ENCODE measurements at regions of chr7 and their contacts with region 1.

Region 1: GRCh38 chr7:80918909-80919662 is at the start of gene SEMA3C:
- DNase-seq: peak; percentile 90
- H3K4me3 ChIP-seq: peak within 1 kb of the TSS; percentile 10 to 69 (median 14)
- H3K27ac ChIP-seq: no peak within 1 kb of the TSS
- H3K4me1 ChIP-seq: peaks cover 10% of the 10 kb centered on the region
- H3K27me3 ChIP-seq: peaks cover 57 to 85% of the 10 kb centered on the region in 2 experiments
- CTCF ChIP-seq: no peak
- POLR2A ChIP-seq: no peak
- total RNA-seq, gene SEMA3C: 0.09 and 0.18 TPM in 2 replicates

Region 2: GRCh38 chr7:80357530-80357929 is 561.6 kb before region 1 on chr7:
- CTCF ChIA-PET with region 1: no interaction called
- POLR2A ChIA-PET with region 1: no interaction called
- dilution Hi-C with region 1: no loop called
- intact Hi-C with region 1: no loop called
- DNase-seq: no peak
- H3K4me3 ChIP-seq: no peak overlapping the region
- H3K27ac ChIP-seq: no peak overlapping the region
- H3K4me1 ChIP-seq: no peaks in the 10 kb centered on the region
- H3K27me3 ChIP-seq: no peaks in the 10 kb centered on the region
- CTCF ChIP-seq: no peak
- POLR2A ChIP-seq: no peak

Region 3: DNA sequence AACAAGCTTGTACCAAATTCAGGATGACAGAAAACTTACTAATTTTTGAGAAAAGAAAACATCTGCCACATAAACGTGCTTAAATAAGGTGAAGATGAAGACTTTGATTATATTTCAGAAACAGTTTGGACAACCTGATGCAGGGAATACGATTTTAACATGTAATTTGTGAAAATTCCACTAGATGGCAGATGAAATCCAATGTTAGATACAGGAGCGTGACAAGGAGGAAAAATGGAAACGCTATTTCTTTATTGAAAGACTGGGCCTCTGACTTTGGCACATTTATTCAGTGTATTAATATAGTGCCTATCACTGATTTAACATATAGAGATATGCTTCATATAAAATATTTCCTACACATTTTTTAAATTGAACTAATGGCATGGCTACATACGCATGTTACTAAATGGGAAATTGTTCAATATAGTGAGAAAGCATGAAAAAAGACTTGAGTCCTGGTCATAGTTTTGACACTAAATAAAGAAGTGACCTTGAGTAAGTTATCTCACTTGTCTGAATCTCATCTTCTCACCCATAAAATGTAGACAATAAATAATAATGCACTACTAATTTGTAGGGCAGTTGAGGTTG is 219.9 kb before region 1 on chr7:
- CTCF ChIA-PET with region 1: interaction called, 4 read pairs
- POLR2A ChIA-PET with region 1: no interaction called
- dilution Hi-C with region 1: no loop called
- intact Hi-C with region 1: loop called (anchors 5 kb)
- DNase-seq: peak; percentile 61
- H3K4me3 ChIP-seq: no peak overlapping the region
- H3K27ac ChIP-seq: no peak overlapping the region
- H3K4me1 ChIP-seq: no peaks in the 10 kb centered on the region
- H3K27me3 ChIP-seq: peaks cover 6 to 18% of the 10 kb centered on the region in 2 experiments
- CTCF ChIP-seq: peak; percentile 32
- POLR2A ChIP-seq: no peak

Region 4: GRCh38 chr7:81211204-81211933 is 292.3 kb after region 1 on chr7:
- CTCF ChIA-PET with region 1: no interaction called
- POLR2A ChIA-PET with region 1: no interaction called
- dilution Hi-C with region 1: no loop called
- intact Hi-C with region 1: loop called (anchors 5 kb)
- DNase-seq: peak; percentile 48
- H3K4me3 ChIP-seq: no peak overlapping the region
- H3K27ac ChIP-seq: no peak overlapping the region
- H3K4me1 ChIP-seq: peaks cover 5% of the 10 kb centered on the region
- H3K27me3 ChIP-seq: no peaks in the 10 kb centered on the region
- CTCF ChIP-seq: no peak
- POLR2A ChIP-seq: no peak

Region 5: GRCh38 chr7:81447351-81447952 is 528.4 kb after region 1 on chr7:
- CTCF ChIA-PET with region 1: interaction called, 12 read pairs
- POLR2A ChIA-PET with region 1: no interaction called
- dilution Hi-C with region 1: no loop called
- intact Hi-C with region 1: loop called (anchors 1 kb)
- DNase-seq: peak; percentile 14
- H3K4me3 ChIP-seq: no peak overlapping the region
- H3K27ac ChIP-seq: no peak overlapping the region
- H3K4me1 ChIP-seq: no peaks in the 10 kb centered on the region
- H3K27me3 ChIP-seq: no peaks in the 10 kb centered on the region
- CTCF ChIP-seq: peak; percentile 18 to 21
- POLR2A ChIP-seq: no peak

Region 6: DNA sequence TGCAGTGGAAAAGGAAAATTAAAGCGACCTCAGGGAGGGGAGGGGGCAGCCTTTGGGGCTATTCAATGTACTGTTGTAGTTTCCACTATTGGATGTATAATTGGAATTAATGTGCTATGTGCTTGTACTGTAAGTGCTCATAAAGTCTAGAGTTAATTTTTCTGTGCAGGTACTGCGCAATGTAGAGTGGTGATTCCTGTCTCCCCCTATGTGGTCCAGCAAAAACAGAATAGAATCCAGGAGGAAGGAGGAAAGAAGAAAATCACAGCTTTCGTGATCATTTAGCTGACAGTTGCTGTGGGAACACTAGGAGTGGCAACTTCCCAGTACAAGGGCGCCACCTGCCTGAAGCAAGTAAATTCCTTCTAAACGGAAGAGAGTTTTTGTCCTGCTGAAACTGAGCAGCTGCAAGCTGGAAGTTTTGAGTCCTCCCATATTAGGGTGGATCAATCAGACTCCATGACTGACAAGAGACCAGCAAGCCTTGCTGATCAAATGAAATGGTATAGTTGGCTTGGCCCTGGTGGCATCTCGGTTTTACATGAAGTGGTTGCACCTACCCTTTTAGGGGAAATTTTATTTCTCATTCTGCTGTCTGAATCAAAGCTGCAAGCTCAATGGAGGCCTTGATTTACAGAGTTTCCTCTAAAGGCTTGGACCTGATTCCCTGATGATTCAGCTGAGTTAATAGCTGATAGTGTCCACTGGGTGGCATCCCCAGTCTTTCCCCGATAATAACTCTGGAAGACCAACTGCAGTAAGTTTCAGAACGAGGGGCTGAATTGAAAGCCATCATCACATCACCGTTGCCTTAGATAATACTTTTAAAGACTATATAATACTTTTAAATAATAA is 551.0 kb after region 1 on chr7:
- CTCF ChIA-PET with region 1: interaction called, 32 read pairs
- POLR2A ChIA-PET with region 1: no interaction called
- dilution Hi-C with region 1: no loop called
- intact Hi-C with region 1: loop called (anchors 1 kb)
- DNase-seq: peak; percentile 54
- H3K4me3 ChIP-seq: no peak overlapping the region
- H3K27ac ChIP-seq: no peak overlapping the region
- H3K4me1 ChIP-seq: no peaks in the 10 kb centered on the region
- H3K27me3 ChIP-seq: peaks cover 7% of the 10 kb centered on the region in 2 experiments
- CTCF ChIP-seq: peak; percentile 62 to 70
- POLR2A ChIP-seq: no peak

Measured in endothelial cell of umbilical vein (primary cell).